Tibial artery (tissue), 4 donors: ENCODE measurements at regions of chr20 and their contacts with region 1.

Region 1: DNA sequence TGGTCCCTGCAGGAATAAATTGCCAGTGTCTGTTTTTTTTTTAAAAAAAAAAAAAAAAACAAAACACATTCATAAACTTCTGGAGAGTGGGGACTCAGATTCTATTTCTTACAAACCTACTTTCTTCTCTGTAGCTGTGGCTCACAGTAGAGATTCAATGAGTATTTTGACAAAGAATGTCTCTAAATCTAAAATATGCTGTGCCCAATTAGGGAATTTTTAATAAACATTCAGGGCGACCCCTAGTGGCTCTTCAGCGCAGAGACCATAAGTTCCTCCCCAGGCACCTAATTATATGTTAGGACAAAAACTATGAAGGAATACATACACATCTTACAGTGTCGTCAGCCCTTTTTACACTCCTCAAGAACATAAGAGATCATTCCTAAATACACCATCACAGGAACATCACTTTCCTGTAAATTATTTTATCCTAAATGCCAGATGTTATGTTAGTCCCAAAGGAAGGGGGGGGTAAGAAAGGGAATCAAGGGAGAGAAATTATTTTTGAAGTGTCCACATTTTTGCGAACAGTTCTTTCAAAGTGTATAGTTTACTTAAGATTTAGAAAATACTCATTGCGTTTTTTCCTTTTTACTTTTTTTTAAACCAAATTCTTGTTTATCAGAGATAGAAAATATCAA is 21.8 kb upstream of the NAA20 start:
- DNase-seq: no peak
- H3K4me3 ChIP-seq: no peak overlapping the region
- H3K27ac ChIP-seq: peak overlapping the region; percentile 73 to 83
- H3K4me1 ChIP-seq: peaks cover 0 to 43% (median 32%) of the 10 kb centered on the region in 4 donors
- H3K27me3 ChIP-seq: no peaks in the 10 kb centered on the region
- CTCF ChIP-seq: peak; percentile 78 to 83

Region 2: DNA sequence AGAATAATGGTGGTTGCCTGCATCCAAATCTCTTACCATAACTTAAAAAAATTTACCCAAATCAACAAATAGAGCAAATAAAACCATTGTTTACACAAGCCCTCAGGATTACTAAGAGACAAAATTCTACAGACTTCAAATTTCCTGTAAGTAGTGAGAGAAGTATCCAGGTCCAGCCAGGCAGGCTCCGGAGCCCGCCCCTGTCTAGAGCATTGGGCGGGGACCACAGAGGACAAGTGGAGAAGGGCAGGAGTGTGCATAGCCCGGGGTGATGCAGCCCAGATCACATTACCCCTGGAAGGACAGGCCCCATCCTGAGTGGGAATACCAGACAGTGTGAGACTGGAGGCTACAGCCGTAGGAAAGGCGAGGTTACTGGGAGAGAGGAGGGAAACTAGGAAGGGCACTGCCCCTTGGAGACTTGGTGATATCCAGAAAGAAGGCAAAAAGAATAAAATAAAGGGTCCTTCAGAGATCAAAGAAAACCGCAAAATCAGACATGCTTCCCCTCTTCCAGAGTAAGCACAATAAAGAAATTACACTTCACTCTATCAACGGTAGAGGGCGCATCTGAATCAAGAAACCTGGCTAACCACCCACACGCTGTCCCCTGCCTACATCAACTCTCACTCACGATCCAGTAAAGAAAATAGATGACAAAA is 210.7 kb before region 1 on chr20:
- intact Hi-C with region 1: loop called (anchors 2 kb)
- DNase-seq: peak in 1 of 2 donors; percentile 49
- H3K4me3 ChIP-seq: no peak overlapping the region
- H3K27ac ChIP-seq: peak overlapping the region; percentile 45 to 61
- H3K4me1 ChIP-seq: peaks cover 0 to 34% (median 25%) of the 10 kb centered on the region in 4 donors
- H3K27me3 ChIP-seq: no peaks in the 10 kb centered on the region
- CTCF ChIP-seq: peak; percentile 76 to 82